ENCODE measurements at regions of chr4 and their contacts with region 1.

Region 1: DNA sequence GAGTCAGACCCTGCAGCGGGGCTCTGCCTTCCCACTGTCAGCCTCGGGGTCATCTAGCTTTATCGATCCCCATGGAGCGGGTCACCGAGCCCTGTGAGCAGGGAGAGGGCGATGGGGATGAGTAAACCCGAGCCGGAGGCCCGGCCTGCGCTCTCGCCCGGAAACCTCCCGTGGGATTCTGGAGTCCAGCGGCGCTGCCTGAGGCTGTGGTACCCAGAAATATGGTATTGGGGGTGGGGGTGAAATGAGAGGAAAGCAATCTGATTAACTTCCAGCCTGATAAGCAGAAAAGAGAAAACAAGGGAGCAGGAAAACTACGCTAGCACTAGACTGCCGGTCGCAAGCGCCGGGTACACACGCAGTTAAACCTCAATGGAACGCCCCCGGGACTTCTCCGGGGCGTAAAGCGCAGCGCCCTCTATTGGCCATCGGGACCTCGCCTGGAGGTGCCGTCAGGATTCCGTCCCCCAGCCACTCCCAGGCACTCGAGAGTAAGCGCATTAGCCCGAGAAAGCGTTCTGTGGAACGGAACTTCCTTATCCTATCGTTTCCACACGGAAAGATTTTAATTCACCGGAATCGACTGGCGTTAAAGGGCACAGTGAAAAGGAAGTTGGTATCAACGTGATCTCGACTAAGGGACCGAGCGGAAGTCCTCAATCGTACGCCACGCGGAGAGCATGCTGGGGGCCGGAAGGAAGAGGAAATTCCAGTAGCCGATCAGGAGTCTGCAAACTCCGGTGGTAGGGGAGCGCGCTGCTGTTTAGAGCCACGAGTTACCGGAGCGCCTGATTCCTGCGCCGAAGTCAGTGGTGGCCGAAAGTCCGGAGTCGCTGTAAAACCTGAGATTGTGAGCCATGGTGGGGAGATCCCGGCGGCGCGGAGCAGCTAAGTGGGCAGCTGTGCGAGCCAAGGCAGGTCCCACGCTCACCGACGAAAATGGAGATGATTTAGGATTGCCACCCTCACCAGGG is at the start of gene UTP3:
- DNase-seq: peak; percentile 89
- H3K4me3 Mint-ChIP-seq: peak within 1 kb of the TSS; percentile 98
- H3K27ac Mint-ChIP-seq: peak within 1 kb of the TSS; percentile 86
- H3K4me1 Mint-ChIP-seq: peaks cover 30% of the 10 kb centered on the region
- H3K27me3 Mint-ChIP-seq: peaks cover 2% of the 10 kb centered on the region
- total RNA-seq, gene UTP3: 44.1 and 46.3 TPM in 2 replicates

Region 2: DNA sequence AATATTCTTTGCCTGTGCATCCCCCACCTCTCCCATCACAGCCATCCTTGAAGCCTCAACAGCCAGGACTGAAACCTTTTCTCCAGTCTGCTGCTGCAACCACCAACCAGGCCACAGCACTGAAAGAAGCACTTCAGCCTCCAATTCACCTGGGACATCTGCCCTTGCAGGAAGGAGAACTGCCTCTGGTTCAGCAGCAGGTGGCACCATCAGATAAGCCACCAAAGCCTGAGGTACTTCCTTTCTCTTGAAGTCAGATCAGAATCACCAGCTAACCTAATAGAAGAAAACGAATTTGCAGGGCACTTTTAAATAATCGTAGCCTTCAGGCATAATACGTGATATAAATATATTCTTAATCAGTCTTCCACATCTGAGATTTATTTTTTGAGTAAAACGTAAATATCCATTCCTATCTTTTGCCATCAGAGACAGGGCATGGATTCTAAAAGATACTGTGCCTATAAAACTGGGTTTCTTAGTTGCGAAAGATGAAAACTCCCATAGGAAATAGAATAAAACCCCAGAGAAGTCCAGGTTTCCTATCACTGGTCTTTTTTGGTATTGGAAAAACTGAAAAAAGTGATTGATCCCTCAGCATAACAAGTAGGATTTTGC is 86.6 kb before region 1 on chr4:
- intact Hi-C with region 1: no loop called
- DNase-seq: peak; percentile 49
- H3K4me3 Mint-ChIP-seq: no peak overlapping the region
- H3K27ac Mint-ChIP-seq: no peak overlapping the region
- H3K4me1 Mint-ChIP-seq: no peaks in the 10 kb centered on the region
- H3K27me3 Mint-ChIP-seq: peaks cover 17% of the 10 kb centered on the region

Region 3: GRCh38 chr4:70624226-70624793 is 63.8 kb before region 1 on chr4:
- intact Hi-C with region 1: loop called (anchors 2 kb)
- DNase-seq: no peak
- H3K4me3 Mint-ChIP-seq: no peak overlapping the region
- H3K27ac Mint-ChIP-seq: no peak overlapping the region
- H3K4me1 Mint-ChIP-seq: no peaks in the 10 kb centered on the region
- H3K27me3 Mint-ChIP-seq: no peaks in the 10 kb centered on the region

Region 4: DNA sequence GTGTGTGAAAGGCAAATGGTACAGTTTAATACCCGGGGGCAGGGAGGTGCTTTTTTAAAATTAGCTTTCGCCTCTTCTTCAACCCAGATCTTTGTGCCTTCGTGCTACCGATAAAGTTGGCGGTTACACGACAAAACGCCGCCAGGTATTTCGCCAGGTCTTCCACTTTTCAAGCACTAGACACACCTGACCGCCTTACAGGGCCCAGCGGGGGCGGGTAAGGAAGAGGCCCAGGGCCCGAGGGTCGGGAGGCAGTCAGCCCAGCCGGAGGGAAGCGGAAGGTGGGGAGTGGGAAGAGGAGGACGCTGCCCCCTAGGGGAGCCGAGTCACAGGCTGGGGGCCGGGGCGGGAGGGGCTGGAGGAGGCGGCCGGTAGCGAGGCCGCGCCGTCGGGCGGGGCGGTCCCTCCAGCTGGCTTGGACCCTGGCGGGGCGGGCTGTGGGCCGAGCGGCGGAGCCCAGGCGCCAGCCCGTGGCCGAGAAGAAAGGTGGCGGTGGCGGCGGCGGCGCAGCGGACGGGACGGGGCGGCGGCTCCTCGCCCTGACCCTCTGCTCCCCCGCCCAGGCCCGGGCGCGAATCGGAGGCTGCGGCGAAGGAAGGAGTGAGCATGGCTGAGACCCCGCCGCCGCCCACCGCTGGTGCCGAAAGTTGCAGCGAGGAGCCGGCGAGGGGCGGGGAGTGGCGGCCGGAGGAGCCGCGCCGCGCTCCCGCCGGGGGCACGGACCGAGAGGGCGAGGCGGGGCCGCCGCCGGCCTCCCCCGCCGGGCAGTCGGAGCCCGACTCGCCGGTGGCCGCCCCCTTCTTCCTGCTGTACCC is 16.4 kb after region 1 on chr4:
- intact Hi-C with region 1: loop called (anchors 1 kb)
- DNase-seq: peak; percentile 40
- H3K4me3 Mint-ChIP-seq: peak overlapping the region; percentile 84
- H3K27ac Mint-ChIP-seq: peak overlapping the region; percentile 81
- H3K4me1 Mint-ChIP-seq: peaks cover 27% of the 10 kb centered on the region
- H3K27me3 Mint-ChIP-seq: no peaks in the 10 kb centered on the region

Region 5: DNA sequence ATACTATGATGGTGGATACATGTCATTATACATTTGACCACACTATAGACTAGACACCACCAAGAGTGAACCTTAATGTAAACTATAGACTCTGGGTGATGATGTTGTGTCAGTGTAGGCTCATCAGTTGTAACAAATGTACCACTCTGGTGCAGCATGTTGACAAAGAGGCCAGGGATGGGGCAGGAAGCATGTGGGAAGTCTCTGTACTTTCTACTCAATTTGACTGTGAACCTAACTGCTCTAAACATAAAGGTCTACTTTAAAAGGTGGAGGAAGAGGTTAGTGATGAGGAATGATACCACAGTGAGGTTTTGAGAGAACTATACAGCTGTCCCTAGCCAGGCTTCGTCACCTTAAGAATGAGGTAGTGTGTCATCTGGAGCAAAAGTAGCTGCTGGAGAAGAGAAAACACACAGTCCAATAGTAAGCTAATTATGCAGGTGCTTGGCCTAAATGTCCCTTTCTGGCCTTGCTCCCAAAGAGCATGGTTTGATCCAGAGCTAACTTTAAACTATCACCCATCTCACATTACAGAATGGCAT is 113.2 kb after region 1 on chr4:
- intact Hi-C with region 1: loop called (anchors 1 kb)
- DNase-seq: no peak
- H3K4me3 Mint-ChIP-seq: no peak overlapping the region
- H3K27ac Mint-ChIP-seq: peak overlapping the region; percentile 59
- H3K4me1 Mint-ChIP-seq: peaks cover 20% of the 10 kb centered on the region
- H3K27me3 Mint-ChIP-seq: no peaks in the 10 kb centered on the region

Region 6: GRCh38 chr4:70901984-70902576 is 214.0 kb after region 1 on chr4 and contains the start of gene MOB1B:
- intact Hi-C with region 1: loop called (anchors 5 kb)
- DNase-seq: peak; percentile 81
- H3K4me3 Mint-ChIP-seq: peak within 1 kb of the TSS; percentile 99
- H3K27ac Mint-ChIP-seq: peak within 1 kb of the TSS; percentile 86
- H3K4me1 Mint-ChIP-seq: peaks cover 20% of the 10 kb centered on the region
- H3K27me3 Mint-ChIP-seq: no peaks in the 10 kb centered on the region
- total RNA-seq, gene MOB1B: 27.0 and 28.1 TPM in 2 replicates

Region 7: GRCh38 chr4:71009890-71010588 is 321.9 kb after region 1 on chr4:
- intact Hi-C with region 1: loop called (anchors 2 kb)
- DNase-seq: no peak
- H3K4me3 Mint-ChIP-seq: no peak overlapping the region
- H3K27ac Mint-ChIP-seq: peak overlapping the region; percentile 67
- H3K4me1 Mint-ChIP-seq: peaks cover 36% of the 10 kb centered on the region
- H3K27me3 Mint-ChIP-seq: no peaks in the 10 kb centered on the region